ENCODE measurements at regions of chr6 and their contacts with region 1.

Region 1: GRCh38 chr6:47977314-47977713 is 133.7 kb downstream of the PTCHD4 start:
- DNase-seq: no peak
- H3K4me3 ChIP-seq: no peak overlapping the region
- CTCF ChIP-seq: no peak

Region 2: DNA sequence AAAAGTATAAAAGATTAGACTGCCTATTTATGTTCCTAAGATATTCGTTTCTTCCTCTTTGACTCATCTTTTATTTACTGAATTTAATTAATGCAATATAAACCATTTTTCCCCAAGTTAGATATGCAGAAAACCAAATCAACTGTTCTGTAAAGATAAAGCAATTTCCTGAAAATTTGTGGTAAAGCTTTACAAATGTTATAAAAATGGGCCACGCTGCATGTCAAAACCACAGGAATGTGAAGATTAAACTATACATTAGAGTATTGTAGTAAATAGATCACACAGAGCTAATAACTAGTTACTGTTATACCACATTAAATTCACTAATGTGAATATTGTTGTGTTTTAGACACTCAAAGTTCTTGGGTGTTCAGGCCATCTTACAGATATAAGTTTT is 112.1 kb before region 1 on chr6:
- in situ Hi-C with region 1: loop called (anchors 5 kb)
- DNase-seq: no peak
- H3K4me3 ChIP-seq: no peak overlapping the region
- CTCF ChIP-seq: no peak

Region 3: GRCh38 chr6:48419992-48420391 is 442.7 kb after region 1 on chr6:
- in situ Hi-C with region 1: no loop called
- DNase-seq: no peak
- H3K4me3 ChIP-seq: no peak overlapping the region
- CTCF ChIP-seq: no peak